ENCODE measurements at regions of chr17 and their contacts with region 1.

Region 1: GRCh38 chr17:60463157-60463835 is 41.0 kb downstream of the CHCT1 start:
- DNase-seq: no peak
- H3K27ac ChIP-seq: no peak overlapping the region
- CTCF ChIP-seq: no peak

Region 2: GRCh38 chr17:60435244-60436167 is 27.8 kb before region 1 on chr17:
- CTCF ChIA-PET with region 1: interaction called, 11 read pairs
- POLR2A ChIA-PET with region 1: no interaction called
- DNase-seq: peak; percentile 70
- H3K27ac ChIP-seq: no peak overlapping the region
- CTCF ChIP-seq: peak; percentile 91

Region 3: DNA sequence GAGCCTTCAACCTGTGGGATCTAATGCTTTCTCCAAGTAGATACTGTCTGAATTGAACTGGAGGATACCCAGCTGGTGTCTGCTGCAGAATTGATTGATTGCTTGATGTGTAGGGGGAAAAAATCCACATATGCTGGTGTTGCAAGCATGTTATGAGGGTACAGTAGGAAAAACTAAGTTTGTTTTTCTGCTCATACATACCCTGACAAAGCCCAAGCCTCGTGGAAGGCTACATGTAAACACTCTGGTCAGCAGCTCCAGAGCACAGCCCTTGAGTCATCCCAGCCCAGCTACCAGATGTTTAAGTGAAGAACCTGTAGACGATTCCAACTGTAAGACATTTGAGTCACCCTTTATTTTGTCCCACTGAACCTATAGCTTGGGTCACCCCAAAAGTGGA is 72.2 kb after region 1 on chr17:
- CTCF ChIA-PET with region 1: no interaction called
- POLR2A ChIA-PET with region 1: no interaction called
- DNase-seq: no peak
- H3K27ac ChIP-seq: no peak overlapping the region
- CTCF ChIP-seq: no peak

Measured in RWPE1 (cell line).